ENCODE measurements at regions of chr15 and their contacts with region 1.

Region 1: DNA sequence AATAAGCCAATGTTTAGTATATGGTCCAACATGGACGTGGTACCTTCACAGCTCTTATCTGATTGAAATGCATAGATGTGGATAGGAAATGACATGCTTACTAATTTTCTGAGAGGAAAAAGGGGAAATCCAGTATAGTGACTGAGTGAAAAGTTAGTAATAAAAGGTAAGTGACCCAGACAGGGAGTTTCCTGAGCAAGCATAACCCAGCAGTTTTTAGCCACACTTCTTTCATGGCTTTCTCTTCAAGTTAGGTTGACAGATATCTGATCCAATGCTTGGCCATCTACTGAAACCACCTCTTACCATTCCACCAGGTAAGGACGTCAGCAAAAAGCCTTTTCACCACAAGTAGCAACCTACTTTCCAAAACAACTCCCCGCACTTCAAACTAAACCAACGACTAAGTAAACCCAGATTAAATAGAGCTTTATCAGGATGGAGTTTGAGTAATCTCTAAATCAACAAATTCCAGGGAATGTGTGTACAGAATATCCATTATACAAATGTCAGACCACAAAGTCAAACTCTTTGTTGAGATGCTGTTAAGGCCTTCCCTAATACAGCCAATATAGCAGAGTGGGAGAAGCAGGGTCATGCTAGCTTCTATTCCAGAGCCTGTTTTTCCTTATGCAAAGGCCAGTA is 329.7 kb downstream of the RORA start:
- DNase-seq: peak; percentile 43
- H3K4me3 Mint-ChIP-seq: peak overlapping the region; percentile 40
- H3K27ac Mint-ChIP-seq: peak overlapping the region; percentile 88
- H3K4me1 Mint-ChIP-seq: peaks cover 70% of the 10 kb centered on the region
- H3K27me3 Mint-ChIP-seq: no peaks in the 10 kb centered on the region

Region 2: DNA sequence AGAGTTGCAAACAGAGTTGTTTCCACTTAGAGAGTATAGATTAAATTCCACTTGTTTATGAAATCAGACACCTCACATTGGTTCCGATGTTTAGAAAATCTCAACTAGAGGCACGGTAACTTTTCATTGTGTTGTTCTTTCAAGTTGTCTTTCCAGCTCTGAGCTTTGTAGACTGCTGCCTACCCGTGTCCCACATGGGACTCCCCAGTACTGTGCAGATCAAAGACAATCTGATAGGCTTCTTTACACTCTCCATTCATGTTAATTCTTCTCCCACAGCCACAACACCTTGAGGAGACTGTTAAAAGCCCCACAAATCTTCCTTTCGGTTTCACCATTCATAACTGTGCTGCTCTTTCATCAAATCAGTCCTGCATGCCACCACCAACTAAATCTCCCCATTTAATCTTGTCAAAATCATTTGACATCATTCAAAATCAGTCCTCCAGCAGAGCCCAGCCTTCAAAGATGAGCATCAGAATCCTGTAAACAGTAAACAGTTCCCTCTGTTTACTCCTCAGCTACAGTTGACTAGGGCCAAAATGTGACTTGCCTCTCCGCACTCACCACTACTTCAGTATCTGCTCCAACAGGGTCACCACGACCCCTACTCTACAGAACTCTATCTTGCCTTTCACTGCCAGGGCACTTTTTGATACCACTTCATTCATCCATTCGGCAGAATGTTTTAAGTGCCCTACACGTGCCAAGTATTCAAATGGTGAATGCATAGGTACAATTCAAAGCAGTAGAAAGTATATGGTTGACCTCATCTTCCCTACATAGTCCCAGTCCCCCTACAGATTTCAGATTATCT is 510.0 kb before region 1 on chr15:
- intact Hi-C with region 1: loop called (anchors 1 kb)
- DNase-seq: peak; percentile 60
- H3K4me3 Mint-ChIP-seq: peak overlapping the region; percentile 34
- H3K27ac Mint-ChIP-seq: peak overlapping the region; percentile 81
- H3K4me1 Mint-ChIP-seq: peaks cover 73% of the 10 kb centered on the region
- H3K27me3 Mint-ChIP-seq: no peaks in the 10 kb centered on the region

Region 3: DNA sequence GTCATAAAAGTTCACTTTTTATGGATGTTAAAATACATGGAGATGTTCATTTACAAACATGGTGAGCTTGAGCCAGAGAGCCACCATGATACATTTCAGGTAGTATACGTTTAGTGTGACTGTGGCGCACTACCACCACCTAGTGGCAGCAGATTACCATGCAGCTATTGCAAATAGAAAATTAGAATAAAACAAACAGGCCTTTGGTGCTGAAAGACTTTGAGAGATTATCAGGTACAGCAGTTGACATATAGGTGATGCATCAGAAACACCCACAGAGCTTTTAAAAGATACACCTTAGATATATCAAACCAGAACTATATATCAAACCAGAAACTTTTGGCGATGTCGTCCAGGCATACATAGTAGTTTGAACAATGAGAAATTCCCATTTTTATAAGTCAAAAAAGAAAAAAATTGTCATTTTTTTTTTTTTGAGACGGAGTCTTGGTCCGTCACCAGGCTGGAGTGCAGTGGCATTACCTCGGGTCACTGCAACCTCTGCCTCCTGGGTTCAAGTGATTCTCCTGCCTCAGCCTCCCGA is 378.5 kb before region 1 on chr15:
- intact Hi-C with region 1: loop called (anchors 1 kb)
- DNase-seq: peak; percentile 63
- H3K4me3 Mint-ChIP-seq: no peak overlapping the region
- H3K27ac Mint-ChIP-seq: peak overlapping the region; percentile 71
- H3K4me1 Mint-ChIP-seq: peaks cover 58% of the 10 kb centered on the region
- H3K27me3 Mint-ChIP-seq: no peaks in the 10 kb centered on the region

Region 4: DNA sequence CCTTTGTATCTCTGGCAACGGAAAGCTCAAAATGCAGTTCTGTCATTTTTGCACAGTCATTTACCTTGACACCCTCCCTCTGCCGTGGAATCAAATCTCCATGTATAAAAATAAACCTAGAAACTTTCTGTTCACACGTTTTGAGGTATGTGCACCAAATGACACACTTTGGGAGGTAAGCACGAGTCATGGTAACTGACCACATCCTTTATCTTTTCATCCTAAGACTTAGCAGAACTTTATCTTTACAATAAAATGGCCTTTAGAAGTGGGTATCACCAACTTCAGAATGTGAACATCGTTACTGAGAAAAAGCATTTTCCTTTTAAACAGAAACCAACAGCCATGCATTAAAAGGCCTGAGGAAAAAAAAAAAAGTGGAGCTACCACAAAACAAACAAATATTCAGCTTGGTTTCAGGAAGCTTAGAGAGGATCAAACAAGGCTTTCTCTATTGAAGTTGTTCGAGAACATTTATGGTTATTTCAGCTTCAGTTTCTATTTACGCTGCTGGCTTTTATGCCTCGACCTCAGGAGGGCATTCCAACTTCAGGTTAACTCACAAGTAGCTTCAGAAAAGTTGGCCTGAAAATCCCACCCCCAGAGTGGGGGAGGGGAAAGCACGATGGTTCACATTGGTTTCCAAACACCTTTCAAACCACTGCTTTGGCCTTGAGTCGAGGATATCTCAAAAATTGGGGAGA is 249.4 kb before region 1 on chr15:
- intact Hi-C with region 1: loop called (anchors 1 kb)
- DNase-seq: peak; percentile 46
- H3K4me3 Mint-ChIP-seq: peak overlapping the region; percentile 70
- H3K27ac Mint-ChIP-seq: peak overlapping the region; percentile 89
- H3K4me1 Mint-ChIP-seq: peaks cover 69% of the 10 kb centered on the region
- H3K27me3 Mint-ChIP-seq: peaks cover under 1% of the 10 kb centered on the region

Region 5: DNA sequence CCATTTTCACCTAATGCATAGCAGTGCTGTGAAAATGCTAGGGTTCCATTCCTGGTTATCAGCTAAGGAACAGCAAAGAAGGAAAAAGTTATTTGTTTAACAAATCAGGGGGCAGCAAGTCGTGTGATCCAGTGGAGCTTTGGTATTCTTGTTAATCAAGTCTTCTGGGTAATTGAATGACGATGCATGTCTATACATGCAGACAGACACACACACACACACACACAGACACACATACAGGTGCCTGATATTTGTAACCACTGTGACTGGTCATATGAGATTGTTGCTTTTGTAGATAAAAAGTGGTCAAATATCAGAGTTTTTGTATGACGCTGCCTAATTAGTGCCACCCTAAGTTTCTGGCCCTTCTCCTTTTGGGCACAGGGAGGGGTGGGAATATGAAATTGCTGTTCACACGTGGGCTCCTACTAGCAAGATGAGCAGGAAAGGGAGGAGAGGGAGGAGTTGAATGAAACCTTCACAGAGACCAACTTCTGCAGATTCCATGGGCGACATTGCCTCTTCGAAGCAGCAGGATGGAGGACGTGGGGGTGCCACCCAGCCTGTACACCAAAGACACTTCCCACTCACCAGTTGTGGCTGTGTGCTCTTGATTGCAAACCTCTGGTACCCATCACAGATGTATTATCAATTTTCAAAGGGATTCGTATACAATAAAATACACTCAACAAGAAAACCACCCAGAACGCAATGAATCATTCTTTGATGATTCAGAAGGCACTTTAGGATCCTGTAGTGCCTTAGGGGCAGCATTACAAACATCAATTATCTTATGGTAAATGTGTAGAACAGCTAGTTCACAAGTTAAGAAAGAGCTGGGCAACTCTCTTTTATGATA is 138.6 kb before region 1 on chr15:
- intact Hi-C with region 1: loop called (anchors 1 kb)
- DNase-seq: no peak
- H3K4me3 Mint-ChIP-seq: no peak overlapping the region
- H3K27ac Mint-ChIP-seq: peak overlapping the region; percentile 41
- H3K4me1 Mint-ChIP-seq: peaks cover 26% of the 10 kb centered on the region
- H3K27me3 Mint-ChIP-seq: peaks cover 2% of the 10 kb centered on the region

Region 6: DNA sequence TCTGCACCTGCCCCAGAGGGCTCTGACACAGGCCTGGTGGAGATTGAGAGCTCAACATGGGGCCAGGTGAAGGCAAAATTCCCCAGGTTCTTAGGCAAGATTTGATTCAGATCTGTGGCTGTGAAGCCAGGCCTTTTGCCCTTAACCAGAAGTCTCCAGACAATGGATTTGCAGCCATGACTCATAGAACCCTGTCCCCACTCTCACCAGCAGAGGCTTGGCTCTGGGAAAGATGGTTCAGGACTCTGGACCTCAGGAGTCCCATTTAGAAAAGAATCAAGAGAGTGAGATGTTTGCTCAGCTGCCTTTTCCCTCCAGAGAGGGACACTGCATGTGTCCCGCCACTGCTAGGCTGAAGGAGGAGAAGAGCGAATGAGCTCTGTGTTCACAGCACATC is 59.1 kb before region 1 on chr15:
- intact Hi-C with region 1: loop called (anchors 1 kb)
- DNase-seq: no peak
- H3K4me3 Mint-ChIP-seq: peak overlapping the region; percentile 49
- H3K27ac Mint-ChIP-seq: peak overlapping the region; percentile 37
- H3K4me1 Mint-ChIP-seq: peaks cover 66% of the 10 kb centered on the region
- H3K27me3 Mint-ChIP-seq: peaks cover 17% of the 10 kb centered on the region

Region 7: DNA sequence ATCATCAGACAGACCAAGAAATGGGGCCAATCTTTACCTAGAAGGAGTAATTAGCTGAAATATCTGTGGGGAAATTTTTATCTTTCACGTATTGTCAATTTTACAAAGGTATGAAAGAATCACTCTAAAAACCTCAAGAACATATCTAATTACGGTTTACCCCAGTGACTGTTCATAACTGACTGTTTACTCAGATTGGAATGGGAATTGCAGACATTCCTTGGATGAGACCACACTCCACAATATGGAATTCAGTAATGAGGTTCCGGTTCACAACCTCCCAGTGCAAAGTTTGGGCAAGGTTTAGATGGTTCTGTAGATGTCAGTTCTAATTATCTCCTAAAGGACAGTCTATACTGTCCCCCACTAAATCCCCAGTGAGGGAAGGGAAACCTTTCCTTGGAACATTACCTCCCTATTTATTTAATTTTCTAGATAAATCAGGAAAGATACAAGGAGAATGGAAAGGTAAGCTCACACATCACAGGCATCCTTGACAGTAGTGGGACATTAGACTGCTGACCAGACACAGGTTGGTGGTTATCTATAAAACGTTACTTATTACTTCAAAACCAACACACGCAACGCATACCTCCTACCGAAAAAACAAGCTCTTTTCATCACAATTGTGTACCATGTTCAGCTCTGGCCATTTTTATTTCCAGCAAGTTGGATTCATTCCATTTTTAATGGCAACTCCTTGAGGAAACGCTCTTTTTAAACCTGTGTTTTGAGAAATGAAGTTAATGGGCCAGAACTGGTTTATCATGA is 199.8 kb after region 1 on chr15:
- intact Hi-C with region 1: no loop called
- DNase-seq: no peak
- H3K4me3 Mint-ChIP-seq: no peak overlapping the region
- H3K27ac Mint-ChIP-seq: no peak overlapping the region
- H3K4me1 Mint-ChIP-seq: no peaks in the 10 kb centered on the region
- H3K27me3 Mint-ChIP-seq: peaks cover 23% of the 10 kb centered on the region

Measured in activated T-helper 1 cell treated with anti-CD3 and anti-CD28 coated beads, Interleukin-12 subunit alpha, Interleukin-12 subunit beta, Interleukin-2, Interleukin-4 antibody, amounts not matched to agents 30 ng/mL and 10 ng/mL and 1 ng/mL, durations not matched to agents 14 hours and 24 hours and 36 hours (primary cell).